ENCODE measurements at regions of chr2 and their contacts with region 1.

Region 1: DNA sequence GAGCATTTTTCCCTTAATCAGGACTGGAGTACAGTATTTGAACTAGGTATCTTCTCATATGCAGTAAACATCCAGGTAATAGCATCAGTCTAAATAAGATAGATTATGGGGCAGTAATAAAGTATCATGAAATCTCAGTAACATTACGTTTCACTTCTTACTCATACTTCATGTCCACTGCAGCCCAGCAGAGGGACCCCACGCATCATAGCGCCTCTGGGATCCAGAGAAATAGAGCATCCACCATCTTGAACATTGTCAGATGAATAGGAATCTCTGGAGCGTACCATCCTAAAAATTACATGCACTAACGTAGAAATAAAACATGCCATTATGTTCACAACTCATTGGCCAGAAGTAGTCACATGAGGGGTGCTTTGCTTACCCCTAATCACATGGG is 499.0 kb downstream of the CPS1 start:
- DNase-seq: peak; percentile 23 to 39
- H3K4me3 ChIP-seq: no peak overlapping the region
- H3K4me3 Mint-ChIP-seq: no peak overlapping the region
- H3K27ac Mint-ChIP-seq: no peak overlapping the region
- H3K4me1 ChIP-seq: no peaks in the 10 kb centered on the region
- H3K4me1 Mint-ChIP-seq: no peaks in the 10 kb centered on the region
- H3K27me3 ChIP-seq: no peaks in the 10 kb centered on the region
- H3K27me3 Mint-ChIP-seq: no peaks in the 10 kb centered on the region
- CTCF ChIP-seq: peak; percentile 19 to 64

Region 2: DNA sequence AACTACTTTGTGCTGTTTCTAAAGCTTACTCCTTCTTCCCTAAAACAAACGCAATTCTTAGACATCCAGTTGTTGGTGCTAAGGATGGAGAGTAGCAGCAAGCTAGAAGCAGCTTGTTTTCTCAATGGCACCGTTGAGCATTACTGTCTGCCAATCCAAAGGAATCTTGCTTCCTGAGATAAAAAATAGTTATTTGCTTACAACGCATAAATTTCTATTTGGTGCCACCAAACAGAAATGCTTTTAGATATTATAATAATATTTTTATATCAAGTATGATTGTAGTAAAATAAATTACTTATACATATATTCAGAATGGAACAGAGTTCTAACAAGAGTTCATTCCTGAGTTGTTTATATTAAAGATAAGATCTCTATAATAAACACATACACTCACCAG is 64.3 kb before region 1 on chr2:
- CTCF ChIA-PET with region 1: no interaction called
- POLR2A ChIA-PET with region 1: no interaction called
- intact Hi-C with region 1: no loop called
- DNase-seq: no peak
- H3K4me3 ChIP-seq: no peak overlapping the region
- H3K4me3 Mint-ChIP-seq: no peak overlapping the region
- H3K27ac Mint-ChIP-seq: no peak overlapping the region
- H3K4me1 ChIP-seq: no peaks in the 10 kb centered on the region
- H3K4me1 Mint-ChIP-seq: no peaks in the 10 kb centered on the region
- H3K27me3 ChIP-seq: no peaks in the 10 kb centered on the region
- H3K27me3 Mint-ChIP-seq: no peaks in the 10 kb centered on the region
- CTCF ChIP-seq: no peak

Region 3: DNA sequence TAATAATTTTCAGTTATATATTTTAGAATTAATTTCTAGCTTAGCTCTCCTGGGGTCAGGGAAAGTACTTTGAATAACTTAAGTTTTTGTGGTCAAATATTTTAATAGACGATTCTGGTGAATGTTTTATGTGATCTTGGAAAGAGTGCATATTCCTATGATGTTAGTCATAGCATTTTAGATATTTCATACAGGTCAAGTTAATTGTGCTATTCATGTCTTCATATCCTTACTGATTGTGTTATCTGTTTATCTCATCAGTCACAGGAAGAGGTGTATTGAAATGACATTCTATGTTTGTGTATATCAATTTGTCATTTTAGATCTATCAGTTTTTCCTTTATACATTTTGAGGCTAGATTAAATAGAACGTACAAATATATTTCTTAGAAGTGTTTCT is 77.1 kb after region 1 on chr2:
- CTCF ChIA-PET with region 1: no interaction called
- POLR2A ChIA-PET with region 1: no interaction called
- intact Hi-C with region 1: no loop called
- DNase-seq: no peak
- H3K4me3 ChIP-seq: no peak overlapping the region
- H3K4me3 Mint-ChIP-seq: no peak overlapping the region
- H3K27ac Mint-ChIP-seq: no peak overlapping the region
- H3K4me1 ChIP-seq: no peaks in the 10 kb centered on the region
- H3K4me1 Mint-ChIP-seq: no peaks in the 10 kb centered on the region
- H3K27me3 ChIP-seq: no peaks in the 10 kb centered on the region
- H3K27me3 Mint-ChIP-seq: no peaks in the 10 kb centered on the region
- CTCF ChIP-seq: no peak

Region 4: GRCh38 chr2:211157856-211158463 is 102.5 kb after region 1 on chr2:
- CTCF ChIA-PET with region 1: no interaction called
- POLR2A ChIA-PET with region 1: no interaction called
- intact Hi-C with region 1: loop called (anchors 1 kb)
- DNase-seq: peak; percentile 71 to 75
- H3K4me3 ChIP-seq: no peak overlapping the region
- H3K4me3 Mint-ChIP-seq: no peak overlapping the region
- H3K27ac Mint-ChIP-seq: no peak overlapping the region
- H3K4me1 ChIP-seq: no peaks in the 10 kb centered on the region
- H3K4me1 Mint-ChIP-seq: no peaks in the 10 kb centered on the region
- H3K27me3 ChIP-seq: no peaks in the 10 kb centered on the region
- H3K27me3 Mint-ChIP-seq: no peaks in the 10 kb centered on the region
- CTCF ChIP-seq: peak; percentile 76 to 84

Region 5: DNA sequence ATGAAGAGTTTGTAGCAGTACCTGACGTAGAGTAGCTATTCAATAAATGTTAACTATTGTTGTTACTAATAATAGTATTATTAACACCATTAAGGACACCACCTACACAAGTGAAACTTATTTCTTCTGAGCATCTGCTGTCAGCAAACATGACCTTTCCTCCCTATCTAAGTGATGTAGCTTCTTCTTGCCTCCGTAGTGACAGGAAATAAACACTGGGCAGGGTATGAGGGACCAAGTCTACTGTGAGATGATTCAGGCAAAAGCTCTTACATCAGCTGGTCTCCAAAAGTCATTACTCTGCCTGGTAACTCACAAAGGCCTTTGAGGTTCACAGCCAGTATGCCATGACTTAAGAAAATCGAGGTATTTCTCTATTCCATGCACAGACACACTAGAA is 251.5 kb after region 1 on chr2:
- CTCF ChIA-PET with region 1: no interaction called
- POLR2A ChIA-PET with region 1: no interaction called
- intact Hi-C with region 1: no loop called
- DNase-seq: no peak
- H3K4me3 ChIP-seq: no peak overlapping the region
- H3K4me3 Mint-ChIP-seq: no peak overlapping the region
- H3K27ac Mint-ChIP-seq: no peak overlapping the region
- H3K4me1 ChIP-seq: no peaks in the 10 kb centered on the region
- H3K4me1 Mint-ChIP-seq: no peaks in the 10 kb centered on the region
- H3K27me3 ChIP-seq: no peaks in the 10 kb centered on the region
- H3K27me3 Mint-ChIP-seq: no peaks in the 10 kb centered on the region
- CTCF ChIP-seq: no peak